HEK293 (cell line): ENCODE measurements at regions of chr6 and their contacts with region 1.

Region 1: DNA sequence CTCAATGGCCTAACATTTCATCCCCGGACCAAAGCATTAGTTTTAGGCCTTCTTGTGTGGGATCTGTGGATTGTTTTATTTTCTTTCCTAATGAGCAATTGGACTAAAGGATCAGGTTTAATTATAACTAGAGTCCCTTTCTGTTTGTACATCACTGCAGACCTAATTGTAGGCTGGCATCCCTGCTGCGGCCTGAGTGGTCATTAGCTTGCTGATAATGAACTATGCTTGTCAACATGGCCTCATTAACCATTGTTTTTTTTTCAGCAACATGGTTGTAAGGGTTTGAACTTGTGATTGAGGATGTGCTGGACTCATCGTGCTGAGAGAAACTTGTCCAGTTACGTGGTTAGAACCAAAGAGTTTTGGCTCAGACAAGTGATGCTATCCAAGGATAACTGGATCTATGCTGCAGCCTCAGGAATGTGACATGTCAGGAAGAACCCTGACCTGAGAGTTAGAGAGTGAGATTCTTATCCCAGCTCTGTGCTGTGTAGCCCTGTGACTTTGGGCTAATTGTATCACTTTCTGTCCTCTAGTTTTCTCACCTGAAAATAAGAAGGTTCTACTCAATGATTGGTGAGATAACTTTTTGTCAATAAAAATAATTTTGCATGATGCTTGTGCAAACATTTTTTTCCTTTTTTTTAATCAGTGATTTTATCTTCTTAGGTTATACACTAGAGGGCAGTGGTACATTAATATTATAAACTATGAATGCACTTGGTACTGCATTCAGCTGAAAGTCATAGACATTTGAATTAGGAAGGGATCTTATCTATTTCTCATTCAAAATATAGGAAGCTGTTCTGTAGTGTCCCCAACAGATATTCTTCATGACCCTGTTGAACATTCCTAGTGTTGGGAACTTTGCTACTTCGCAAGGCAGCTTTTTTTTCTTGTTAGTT is 140.9 kb downstream of the RNF144B start:
- H3K4me3 ChIP-seq: no peak overlapping the region
- H3K27ac ChIP-seq: no peak overlapping the region
- H3K4me1 ChIP-seq: no peaks in the 10 kb centered on the region
- CTCF ChIP-seq: no peak

Region 2: GRCh38 chr6:18491308-18492045 is 36.6 kb before region 1 on chr6:
- CTCF ChIA-PET with region 1: no interaction called
- POLR2A ChIA-PET with region 1: no interaction called
- H3K4me3 ChIP-seq: no peak overlapping the region
- H3K27ac ChIP-seq: no peak overlapping the region
- H3K4me1 ChIP-seq: no peaks in the 10 kb centered on the region
- CTCF ChIP-seq: no peak

Region 3: DNA sequence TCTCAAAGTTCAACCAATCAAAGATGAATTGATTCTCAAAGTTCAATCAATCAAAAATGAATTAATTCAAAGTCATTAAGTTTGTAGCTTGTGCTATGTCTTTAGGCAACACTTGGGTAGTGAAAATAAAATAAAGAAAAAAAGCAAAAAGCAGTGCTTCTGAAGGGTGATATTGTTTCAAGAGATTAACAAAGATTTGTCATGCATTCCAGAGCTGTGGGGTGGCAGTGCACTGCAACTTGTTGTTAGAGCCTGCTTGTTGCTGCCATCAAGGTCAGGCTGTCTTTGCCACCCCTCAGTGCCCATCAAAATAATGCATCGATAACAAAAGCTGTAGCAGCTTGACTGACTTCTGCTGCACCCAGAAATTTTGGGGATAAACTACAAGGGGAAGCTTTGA is 12.3 kb before region 1 on chr6:
- CTCF ChIA-PET with region 1: interaction called, 10 read pairs
- POLR2A ChIA-PET with region 1: no interaction called
- H3K4me3 ChIP-seq: no peak overlapping the region
- H3K27ac ChIP-seq: no peak overlapping the region
- H3K4me1 ChIP-seq: no peaks in the 10 kb centered on the region
- CTCF ChIP-seq: no peak

Region 4: DNA sequence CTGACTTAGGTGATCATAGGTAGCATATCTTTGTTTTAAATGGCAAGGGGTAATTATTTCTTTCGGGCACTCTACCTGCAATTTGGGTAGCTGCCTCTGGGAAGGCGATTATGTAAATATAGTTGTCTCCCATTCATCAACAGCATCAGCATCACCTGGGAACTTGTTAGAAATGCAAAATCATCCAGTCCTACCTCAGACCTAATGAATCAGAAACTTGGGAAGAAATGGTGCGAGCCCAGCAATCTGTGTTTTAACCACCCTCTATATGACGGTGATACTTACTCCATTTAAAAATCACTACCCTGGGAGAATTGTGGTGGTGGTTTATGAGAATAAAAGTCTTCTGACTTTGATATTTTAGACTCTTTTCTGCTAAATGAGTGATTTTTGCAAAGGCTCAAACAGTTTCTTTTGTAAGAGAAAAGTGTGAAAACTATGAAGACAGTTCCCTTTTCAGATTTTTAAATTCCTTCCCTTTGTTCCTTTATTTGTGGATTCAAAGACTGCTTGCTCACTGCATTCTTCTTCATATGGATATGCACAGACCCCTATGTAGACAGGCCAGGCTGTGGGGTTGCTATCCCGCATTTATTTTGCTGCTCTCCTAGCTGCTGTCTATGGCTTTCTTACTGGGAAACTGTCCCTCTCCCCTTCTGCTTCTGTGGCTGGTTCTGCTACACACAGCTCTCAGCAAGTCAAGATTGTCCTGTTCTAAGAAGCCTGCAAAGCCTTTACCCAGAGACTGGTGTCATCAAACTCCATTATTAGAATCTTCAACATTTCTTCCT is 224.4 kb after region 1 on chr6:
- CTCF ChIA-PET with region 1: interaction called, 11 read pairs
- POLR2A ChIA-PET with region 1: no interaction called
- H3K4me3 ChIP-seq: no peak overlapping the region
- H3K27ac ChIP-seq: no peak overlapping the region
- H3K4me1 ChIP-seq: no peaks in the 10 kb centered on the region
- CTCF ChIP-seq: no peak